ENCODE measurements at regions of chr3 and their contacts with region 1.

Region 1: DNA sequence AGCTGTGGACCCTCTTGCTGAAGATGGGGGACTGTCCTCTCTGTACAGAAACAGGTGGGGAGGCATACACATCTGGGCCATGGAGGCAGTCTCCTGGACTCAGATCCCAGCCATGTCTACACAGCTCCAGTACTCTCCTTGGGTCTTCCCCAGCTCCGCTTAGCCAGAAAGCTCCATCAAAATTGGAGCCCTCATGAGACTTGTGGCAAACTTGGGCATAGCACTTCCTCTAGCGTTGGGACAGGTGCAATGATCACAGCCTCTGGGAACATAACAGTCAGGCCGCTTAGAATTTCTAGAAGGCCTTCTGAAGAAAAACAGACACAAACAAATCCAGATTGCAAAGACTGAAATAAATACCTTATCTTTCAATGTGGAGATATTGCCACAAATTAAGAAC is 634.3 kb upstream of the GOLIM4 start:
- DNase-seq: no peak
- H3K4me3 ChIP-seq: no peak overlapping the region
- H3K27ac ChIP-seq: no peak overlapping the region
- H3K4me1 ChIP-seq: no peaks in the 10 kb centered on the region
- H3K27me3 ChIP-seq: no peaks in the 10 kb centered on the region
- CTCF ChIP-seq: no peak
- EP300 ChIP-seq: no peak
- POLR2A ChIP-seq: no peak

Region 2: GRCh38 chr3:168782193-168782592 is 52.1 kb after region 1 on chr3:
- in situ Hi-C with region 1: no loop called
- intact Hi-C with region 1: no loop called
- DNase-seq: no peak
- H3K4me3 ChIP-seq: no peak overlapping the region
- H3K27ac ChIP-seq: no peak overlapping the region
- H3K4me1 ChIP-seq: no peaks in the 10 kb centered on the region
- H3K27me3 ChIP-seq: no peaks in the 10 kb centered on the region
- CTCF ChIP-seq: no peak
- EP300 ChIP-seq: no peak
- POLR2A ChIP-seq: no peak

Region 3: GRCh38 chr3:169362301-169362700 is 632.2 kb after region 1 on chr3:
- in situ Hi-C with region 1: no loop called
- intact Hi-C with region 1: loop called (anchors 5 kb)
- DNase-seq: peak; percentile 55
- H3K4me3 ChIP-seq: no peak overlapping the region
- H3K27ac ChIP-seq: no peak overlapping the region
- H3K4me1 ChIP-seq: peaks cover 0 to 18% (median 7%) of the 10 kb centered on the region in 4 donors
- H3K27me3 ChIP-seq: no peaks in the 10 kb centered on the region
- CTCF ChIP-seq: no peak
- EP300 ChIP-seq: no peak
- POLR2A ChIP-seq: no peak

Region 4: GRCh38 chr3:169710619-169711018 is 980.5 kb after region 1 on chr3:
- in situ Hi-C with region 1: no loop called
- intact Hi-C with region 1: no loop called
- DNase-seq: no peak
- H3K4me3 ChIP-seq: no peak overlapping the region
- H3K27ac ChIP-seq: no peak overlapping the region
- H3K4me1 ChIP-seq: no peaks in the 10 kb centered on the region
- H3K27me3 ChIP-seq: no peaks in the 10 kb centered on the region
- CTCF ChIP-seq: no peak
- EP300 ChIP-seq: no peak
- POLR2A ChIP-seq: no peak

Measured in transverse colon (tissue), 4 donors.